Breast epithelium (tissue), 4 donors: ENCODE measurements at regions of chr5 and their contacts with region 1.

Region 1: GRCh38 chr5:67182301-67182790 is 14.3 kb downstream of the CD180 start:
- DNase-seq: peak in 1 of 2 donors; percentile 66
- H3K4me3 ChIP-seq: peak overlapping the region in 1 of 3 donors; percentile 46
- H3K27ac ChIP-seq: peak overlapping the region; percentile 76 to 87
- H3K4me1 ChIP-seq: peaks cover 0 to 6% of the 10 kb centered on the region in 2 donors
- H3K27me3 ChIP-seq: no peaks in the 10 kb centered on the region
- CTCF ChIP-seq: no peak
- POLR2A ChIP-seq: no peak

Region 2: DNA sequence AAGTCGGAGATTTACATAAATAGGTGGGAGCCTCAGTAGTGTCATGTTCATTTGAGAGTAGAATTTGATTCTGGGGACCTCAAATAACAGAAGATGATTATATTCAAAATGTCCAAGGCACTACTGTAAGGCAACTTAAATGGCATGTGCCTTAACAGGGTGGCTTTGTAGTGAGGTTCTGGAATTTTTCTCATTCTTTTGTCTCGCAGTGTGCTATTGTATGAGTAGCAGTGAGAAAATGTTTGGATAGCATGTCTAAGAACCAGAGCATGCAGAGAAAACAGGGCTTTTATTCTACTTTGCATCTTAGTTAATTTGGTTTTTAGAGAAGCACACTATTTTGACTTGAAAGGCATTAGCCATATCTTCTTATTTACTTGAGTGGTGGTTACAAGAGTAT is 561.2 kb before region 1 on chr5:
- intact Hi-C with region 1: loop called (anchors 5 kb)
- DNase-seq: no peak
- H3K4me3 ChIP-seq: no peak overlapping the region
- H3K27ac ChIP-seq: no peak overlapping the region
- H3K4me1 ChIP-seq: no peaks in the 10 kb centered on the region
- H3K27me3 ChIP-seq: no peaks in the 10 kb centered on the region
- CTCF ChIP-seq: no peak
- POLR2A ChIP-seq: no peak

Region 3: DNA sequence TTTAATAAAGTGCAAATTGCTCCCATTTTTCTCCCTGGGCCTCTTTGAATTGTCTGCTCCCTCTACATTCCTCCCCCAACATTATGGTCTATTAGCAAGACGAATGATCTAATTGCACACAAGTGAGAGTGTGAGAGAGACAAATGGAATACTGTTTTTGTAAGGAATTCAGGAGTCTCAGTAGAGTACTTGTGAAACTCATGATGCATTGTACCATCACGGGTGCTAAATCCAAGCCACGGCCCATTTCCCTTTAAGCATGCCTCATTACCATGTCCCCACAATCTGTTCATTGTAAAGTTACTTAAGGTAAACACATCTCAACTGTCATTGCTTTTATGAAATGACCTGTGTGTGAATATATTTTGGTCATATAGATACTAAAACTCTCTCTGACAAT is 48.6 kb before region 1 on chr5:
- intact Hi-C with region 1: no loop called
- DNase-seq: no peak
- H3K4me3 ChIP-seq: no peak overlapping the region
- H3K27ac ChIP-seq: no peak overlapping the region
- H3K4me1 ChIP-seq: no peaks in the 10 kb centered on the region
- H3K27me3 ChIP-seq: no peaks in the 10 kb centered on the region
- CTCF ChIP-seq: no peak
- POLR2A ChIP-seq: no peak